ENCODE measurements at regions of chr2 and their contacts with region 1.

Region 1: GRCh38 chr2:111887819-111888223 is 3.8 kb upstream of the ANAPC1 start:
- DNase-seq: peak; percentile 51
- H3K27ac ChIP-seq: no peak overlapping the region
- CTCF ChIP-seq: peak; percentile 81

Region 2: GRCh38 chr2:111897924-111898702 is 10.3 kb after region 1 on chr2 and contains the start of gene MERTK:
- CTCF ChIA-PET with region 1: interaction called, 12 read pairs
- POLR2A ChIA-PET with region 1: no interaction called
- DNase-seq: peak; percentile 73
- H3K27ac ChIP-seq: 0 out of 2 replicates have a peak within 1 kb of the TSS, but pooled peaks have one; percentile 1
- CTCF ChIP-seq: peak; percentile 64

Region 3: DNA sequence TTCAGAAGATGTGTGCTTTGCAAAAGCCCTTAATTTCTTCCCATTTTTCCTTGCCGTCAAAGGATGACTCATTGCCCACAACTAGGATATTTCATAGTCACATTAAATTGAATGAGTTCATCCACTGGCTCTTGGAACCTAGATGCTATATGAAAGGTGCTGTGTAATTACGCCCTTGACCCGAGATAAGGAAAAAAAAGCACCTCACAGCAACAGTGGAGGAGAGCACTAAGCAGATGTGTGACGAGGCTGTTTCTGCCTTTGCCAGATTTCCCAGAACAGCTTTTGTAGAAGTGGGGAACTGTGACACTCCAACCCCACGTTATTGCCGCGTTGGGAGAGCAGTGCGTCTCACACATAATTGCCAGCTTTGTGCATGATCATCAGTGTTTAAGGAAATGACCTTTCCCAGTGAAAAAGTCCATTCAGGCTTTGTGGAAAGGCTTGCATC is 134.0 kb after region 1 on chr2:
- CTCF ChIA-PET with region 1: no interaction called
- POLR2A ChIA-PET with region 1: no interaction called
- DNase-seq: no peak
- H3K27ac ChIP-seq: no peak overlapping the region
- CTCF ChIP-seq: no peak

Region 4: DNA sequence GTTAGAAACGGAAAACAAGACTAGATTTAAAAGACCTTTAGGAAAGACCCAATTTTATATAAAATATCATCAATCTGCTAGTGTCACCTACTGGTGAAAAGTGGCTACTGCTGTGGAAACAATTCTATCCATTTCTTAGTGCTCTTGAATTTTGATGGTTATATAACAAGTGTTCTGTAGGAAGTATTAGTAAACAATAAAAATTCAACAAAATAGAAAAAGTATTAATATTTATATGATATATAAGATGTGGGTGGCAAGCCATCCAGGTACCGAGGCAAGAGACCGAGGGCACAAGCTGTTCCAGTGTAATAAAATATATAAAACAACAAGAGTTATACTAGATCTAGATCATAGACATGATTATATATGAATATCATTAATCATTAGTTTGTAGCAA is 161.1 kb after region 1 on chr2:
- CTCF ChIA-PET with region 1: interaction called, 12 read pairs
- POLR2A ChIA-PET with region 1: interaction called, 3 read pairs
- DNase-seq: peak; percentile 29
- H3K27ac ChIP-seq: no peak overlapping the region
- CTCF ChIP-seq: peak; percentile 85

Measured in RWPE1 (cell line).